ENCODE measurements at regions of chr17 and their contacts with region 1.

Region 1: DNA sequence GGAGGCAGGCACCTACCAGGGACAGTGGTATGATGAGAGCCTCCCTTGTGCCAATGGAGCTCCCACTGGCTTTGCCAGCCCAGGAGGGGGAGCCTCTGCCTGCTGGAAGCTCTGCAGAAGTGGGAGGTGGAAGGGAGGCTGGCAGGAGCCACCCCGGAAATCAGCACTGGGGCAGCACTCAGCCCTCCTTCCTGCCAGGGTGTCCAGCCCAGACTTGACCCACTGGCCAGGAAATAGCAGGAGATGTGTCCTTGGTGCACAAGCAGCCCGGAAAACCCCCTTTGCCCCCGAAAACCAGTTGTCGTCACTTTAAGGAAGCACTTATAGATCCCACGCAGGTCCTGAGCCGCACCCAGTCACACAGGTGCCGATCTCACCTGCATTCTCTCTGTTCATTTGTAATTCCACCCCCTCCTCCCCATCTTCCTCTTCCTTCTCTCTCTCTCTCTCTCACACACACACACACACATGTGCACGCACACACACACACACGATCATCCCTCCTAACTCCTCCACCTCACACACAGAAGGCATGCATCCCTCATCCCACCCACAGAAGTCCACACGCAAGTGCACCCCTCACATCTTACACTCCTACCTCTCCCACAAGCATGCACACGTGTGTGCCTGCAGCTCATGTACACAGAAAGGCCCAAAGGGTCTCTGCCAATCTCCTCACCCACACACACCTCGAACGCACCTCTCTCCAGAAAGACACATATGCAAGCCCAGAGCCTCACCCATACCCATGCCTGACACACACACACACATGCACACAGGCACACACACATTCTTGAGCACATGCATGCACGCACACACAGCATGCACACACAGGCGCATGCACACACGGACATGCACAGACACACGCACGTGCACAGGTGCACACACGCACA is 49.1 kb upstream of the CACNG4 start:
- DNase-seq: no peak
- H3K4me3 ChIP-seq: no peak overlapping the region
- H3K27ac ChIP-seq: no peak overlapping the region
- H3K27me3 ChIP-seq: peaks cover 39% of the 10 kb centered on the region
- CTCF ChIP-seq: peak; percentile 41

Region 2: DNA sequence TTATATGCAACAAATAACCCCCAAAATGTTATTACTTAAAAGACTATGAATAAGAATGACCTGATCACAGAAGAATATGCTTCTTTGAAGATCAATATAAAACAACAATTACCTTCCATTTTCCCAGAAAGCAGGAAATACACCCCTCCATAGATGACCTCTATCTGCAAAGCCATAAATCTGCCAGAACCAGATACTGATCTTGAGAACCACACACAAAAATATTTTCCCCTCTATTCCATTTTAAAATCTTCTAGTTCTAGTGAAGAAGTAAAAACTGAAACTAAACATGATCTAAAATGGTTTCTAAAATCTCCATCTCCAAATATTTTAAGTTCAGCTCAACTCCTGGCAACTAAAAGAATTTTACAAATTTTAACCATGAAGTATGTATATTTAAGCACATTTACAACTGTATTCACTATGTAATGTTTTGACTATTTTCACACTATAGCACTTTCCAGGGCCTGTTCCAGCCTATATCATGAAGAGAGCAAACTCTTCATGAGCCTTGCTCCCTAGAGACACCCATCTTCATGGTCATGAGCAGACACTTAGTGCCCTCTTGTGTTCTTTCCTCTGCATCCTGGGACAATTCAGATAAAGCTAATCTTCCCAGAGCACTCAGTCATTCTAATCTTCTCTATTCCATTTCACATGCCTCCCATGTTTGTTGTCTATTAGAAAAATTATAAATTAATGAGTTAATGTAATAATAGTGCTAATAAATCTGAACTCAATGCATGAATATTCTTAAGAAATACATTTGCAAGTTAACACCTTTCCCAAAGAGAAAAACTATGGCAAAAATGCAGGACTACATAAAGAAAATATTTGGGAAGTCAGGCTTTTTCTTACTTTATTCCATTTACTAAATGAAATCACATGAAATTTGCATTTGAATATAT is 242.5 kb after region 1 on chr17:
- CTCF ChIA-PET with region 1: interaction called, 12 read pairs
- POLR2A ChIA-PET with region 1: no interaction called
- DNase-seq: no peak
- H3K4me3 ChIP-seq: no peak overlapping the region
- H3K27ac ChIP-seq: no peak overlapping the region
- H3K27me3 ChIP-seq: no peaks in the 10 kb centered on the region
- CTCF ChIP-seq: peak; percentile 49